ENCODE measurements at regions of chr9 and their contacts with region 1.

Region 1: DNA sequence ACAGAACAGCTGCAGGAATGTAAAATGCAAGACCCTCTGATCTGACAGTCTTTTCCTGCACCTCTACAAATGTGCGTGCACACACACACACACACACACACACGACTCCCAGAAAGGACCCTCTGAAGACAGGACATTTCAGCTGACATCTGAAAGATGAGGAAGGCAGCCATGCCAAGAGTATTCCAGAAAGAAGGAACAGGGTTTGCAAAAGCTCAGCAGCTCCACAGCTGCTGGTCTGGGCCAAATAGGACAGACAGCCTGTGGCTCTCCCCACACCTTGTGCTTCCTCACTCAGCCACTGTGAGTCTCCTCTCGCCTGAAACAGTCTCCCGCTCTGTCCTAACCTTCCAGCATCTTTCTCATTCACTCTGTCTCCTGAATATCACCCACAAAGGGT is 189.0 kb downstream of the PALM2AKAP2 start:
- DNase-seq: no peak
- H3K4me3 ChIP-seq: no peak overlapping the region
- H3K4me3 Mint-ChIP-seq: peak overlapping the region; percentile 5 to 73 (median 54)
- H3K27ac ChIP-seq: peak overlapping the region; percentile 47
- H3K27ac Mint-ChIP-seq: peak overlapping the region; percentile 82 to 96 (median 90)
- H3K4me1 ChIP-seq: peaks cover 43% of the 10 kb centered on the region
- H3K4me1 Mint-ChIP-seq: peaks cover 23 to 71% (median 50%) of the 10 kb centered on the region in 4 donors
- H3K27me3 ChIP-seq: no peaks in the 10 kb centered on the region
- H3K27me3 Mint-ChIP-seq: no peaks in the 10 kb centered on the region

Region 2: DNA sequence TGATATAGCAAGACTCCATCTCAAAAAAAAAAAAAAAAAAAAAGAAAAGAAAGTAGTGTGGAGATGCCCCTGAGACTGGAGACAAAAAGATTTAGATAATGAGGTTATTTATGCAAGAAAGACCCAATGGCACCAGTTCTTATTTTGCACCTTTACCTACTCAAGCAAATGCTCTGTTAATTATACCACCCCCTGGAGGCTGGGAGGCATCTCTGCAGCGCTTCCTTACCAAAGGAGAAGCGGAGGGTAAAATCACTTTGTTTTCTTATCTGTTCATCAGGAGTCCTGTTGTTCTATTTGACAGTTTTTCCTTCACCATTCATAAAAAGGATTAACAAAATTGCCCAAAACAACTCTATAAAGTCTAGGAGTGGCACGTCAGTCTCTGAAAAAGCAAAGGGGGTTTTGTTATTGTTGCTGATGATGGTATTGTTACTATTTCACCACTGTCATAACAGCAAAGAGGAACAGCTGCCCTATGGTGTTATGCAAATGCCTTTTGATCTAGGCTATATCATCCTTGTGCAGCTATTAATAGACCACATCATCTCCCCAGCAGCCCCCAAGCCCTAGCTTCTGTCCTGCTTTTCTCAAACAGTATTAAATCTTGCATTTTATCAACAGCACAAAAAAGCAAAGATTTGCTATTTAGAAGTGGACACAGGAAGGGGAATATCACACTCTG is 15.1 kb before region 1 on chr9:
- CTCF ChIA-PET with region 1: interaction called, 6 read pairs
- POLR2A ChIA-PET with region 1: interaction called, 11 read pairs
- intact Hi-C with region 1: no loop called
- DNase-seq: no peak
- H3K4me3 ChIP-seq: no peak overlapping the region
- H3K4me3 Mint-ChIP-seq: no peak overlapping the region
- H3K27ac ChIP-seq: no peak overlapping the region
- H3K27ac Mint-ChIP-seq: no peak overlapping the region
- H3K4me1 ChIP-seq: peaks cover 13% of the 10 kb centered on the region
- H3K4me1 Mint-ChIP-seq: peaks cover 6 to 19% (median 12%) of the 10 kb centered on the region in 4 donors
- H3K27me3 ChIP-seq: no peaks in the 10 kb centered on the region
- H3K27me3 Mint-ChIP-seq: no peaks in the 10 kb centered on the region

Region 3: GRCh38 chr9:110007477-110008270 is 38.7 kb after region 1 on chr9:
- CTCF ChIA-PET with region 1: interaction called, 4 read pairs
- POLR2A ChIA-PET with region 1: interaction called, 8 read pairs
- intact Hi-C with region 1: loop called (anchors 5 kb)
- DNase-seq: no peak
- H3K4me3 ChIP-seq: no peak overlapping the region
- H3K4me3 Mint-ChIP-seq: no peak overlapping the region
- H3K27ac ChIP-seq: no peak overlapping the region
- H3K27ac Mint-ChIP-seq: peak overlapping the region in 1 of 7 donors; percentile 18
- H3K4me1 ChIP-seq: peaks cover 15% of the 10 kb centered on the region
- H3K4me1 Mint-ChIP-seq: peaks cover 11 to 34% (median 23%) of the 10 kb centered on the region in 4 donors
- H3K27me3 ChIP-seq: no peaks in the 10 kb centered on the region
- H3K27me3 Mint-ChIP-seq: peaks cover 0 to 2% of the 10 kb centered on the region in 2 donors

Region 4: DNA sequence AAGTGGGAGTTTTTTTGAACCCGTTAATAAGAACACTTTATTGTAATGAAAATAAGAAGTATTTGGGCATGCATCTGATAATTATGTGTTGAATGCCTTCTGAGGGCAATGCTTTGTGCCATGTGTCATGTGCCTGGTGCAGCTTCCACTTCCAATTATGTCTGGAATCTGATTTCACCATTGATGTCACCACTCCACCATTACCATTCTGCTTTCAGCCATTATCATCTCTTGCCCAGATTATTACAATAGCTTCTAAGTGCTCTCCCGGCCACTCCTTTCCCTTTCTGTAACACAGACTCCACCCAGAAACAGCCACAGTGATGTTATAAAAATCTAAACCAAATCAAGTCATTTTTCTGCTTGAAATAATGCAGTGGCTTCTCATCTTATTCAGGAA is 67.3 kb after region 1 on chr9:
- CTCF ChIA-PET with region 1: no interaction called
- POLR2A ChIA-PET with region 1: no interaction called
- intact Hi-C with region 1: no loop called
- DNase-seq: no peak
- H3K4me3 ChIP-seq: no peak overlapping the region
- H3K4me3 Mint-ChIP-seq: no peak overlapping the region
- H3K27ac ChIP-seq: no peak overlapping the region
- H3K27ac Mint-ChIP-seq: no peak overlapping the region
- H3K4me1 ChIP-seq: no peaks in the 10 kb centered on the region
- H3K4me1 Mint-ChIP-seq: peaks cover 0 to 3% (median under 1%) of the 10 kb centered on the region in 4 donors
- H3K27me3 ChIP-seq: no peaks in the 10 kb centered on the region
- H3K27me3 Mint-ChIP-seq: no peaks in the 10 kb centered on the region

Region 5: GRCh38 chr9:110183208-110184145 is 214.5 kb after region 1 on chr9:
- CTCF ChIA-PET with region 1: no interaction called
- POLR2A ChIA-PET with region 1: no interaction called
- intact Hi-C with region 1: no loop called
- DNase-seq: peak in 4 of 5 donors; percentile 25 to 43 (median 40)
- H3K4me3 ChIP-seq: no peak overlapping the region
- H3K4me3 Mint-ChIP-seq: no peak overlapping the region
- H3K27ac ChIP-seq: no peak overlapping the region
- H3K27ac Mint-ChIP-seq: peak overlapping the region in 1 of 7 donors; percentile 32
- H3K4me1 ChIP-seq: no peaks in the 10 kb centered on the region
- H3K4me1 Mint-ChIP-seq: peaks cover 0 to 7% (median 0%) of the 10 kb centered on the region in 4 donors
- H3K27me3 ChIP-seq: no peaks in the 10 kb centered on the region
- H3K27me3 Mint-ChIP-seq: peaks cover 0 to 3% of the 10 kb centered on the region in 2 donors

Region 6: GRCh38 chr9:111438541-111439235 is 1469.7 kb after region 1 on chr9:
- CTCF ChIA-PET with region 1: no interaction called
- POLR2A ChIA-PET with region 1: no interaction called
- intact Hi-C with region 1: no loop called
- DNase-seq: no peak
- H3K4me3 ChIP-seq: no peak overlapping the region
- H3K4me3 Mint-ChIP-seq: peak overlapping the region in 1 of 8 donors; percentile 52
- H3K27ac ChIP-seq: no peak overlapping the region
- H3K27ac Mint-ChIP-seq: no peak overlapping the region
- H3K4me1 ChIP-seq: no peaks in the 10 kb centered on the region
- H3K4me1 Mint-ChIP-seq: no peaks in the 10 kb centered on the region
- H3K27me3 ChIP-seq: no peaks in the 10 kb centered on the region
- H3K27me3 Mint-ChIP-seq: no peaks in the 10 kb centered on the region

Measured in CD4-positive, alpha-beta memory T cell (primary cell).